ENCODE measurements at regions of chr13 and their contacts with region 1.

Region 1: GRCh38 chr13:48412881-48413351 is at the start of gene LPAR6:
- DNase-seq: peak; percentile 22
- H3K4me3 Mint-ChIP-seq: peak within 1 kb of the TSS; percentile 75
- H3K27ac Mint-ChIP-seq: peak within 1 kb of the TSS; percentile 86
- H3K4me1 Mint-ChIP-seq: no peaks in the 10 kb centered on the region
- H3K27me3 Mint-ChIP-seq: no peaks in the 10 kb centered on the region
- CTCF ChIP-seq: no peak
- total RNA-seq, gene LPAR6: 16.4 TPM in 2 replicates

Region 2: GRCh38 chr13:46507981-46508380 is 1904.9 kb before region 1 on chr13:
- CTCF ChIA-PET with region 1: interaction called, 11 read pairs
- intact Hi-C with region 1: no loop called
- DNase-seq: no peak
- H3K4me3 Mint-ChIP-seq: no peak overlapping the region
- H3K27ac Mint-ChIP-seq: no peak overlapping the region
- H3K4me1 Mint-ChIP-seq: no peaks in the 10 kb centered on the region
- H3K27me3 Mint-ChIP-seq: no peaks in the 10 kb centered on the region
- CTCF ChIP-seq: no peak

Region 3: GRCh38 chr13:48448959-48449614 is 36.2 kb after region 1 on chr13:
- CTCF ChIA-PET with region 1: no interaction called
- intact Hi-C with region 1: loop called (anchors 5 kb)
- DNase-seq: no peak
- H3K4me3 Mint-ChIP-seq: no peak overlapping the region
- H3K27ac Mint-ChIP-seq: no peak overlapping the region
- H3K4me1 Mint-ChIP-seq: peaks cover 10% of the 10 kb centered on the region
- H3K27me3 Mint-ChIP-seq: no peaks in the 10 kb centered on the region
- CTCF ChIP-seq: no peak

Measured in Calu3 (cell line).